ENCODE measurements at regions of chr6 and their contacts with region 1.

Region 1: GRCh38 chr6:324116-325075 is 32.1 kb downstream of the DUSP22 start:
- DNase-seq: no peak
- H3K4me3 ChIP-seq: peak overlapping the region in 1 of 3 donors; percentile 4
- H3K27ac ChIP-seq: no peak overlapping the region
- H3K4me1 ChIP-seq: peaks cover 4 to 7% of the 10 kb centered on the region in 2 donors
- H3K27me3 ChIP-seq: no peaks in the 10 kb centered on the region
- CTCF ChIP-seq: no peak
- POLR2A ChIP-seq: no peak

Region 2: GRCh38 chr6:308768-309167 is 15.6 kb before region 1 on chr6:
- intact Hi-C with region 1: loop called (anchors 1 kb)
- DNase-seq: no peak
- H3K4me3 ChIP-seq: no peak overlapping the region
- H3K27ac ChIP-seq: no peak overlapping the region
- H3K4me1 ChIP-seq: no peaks in the 10 kb centered on the region
- H3K27me3 ChIP-seq: no peaks in the 10 kb centered on the region
- CTCF ChIP-seq: no peak
- POLR2A ChIP-seq: no peak